Uterus (tissue), 4 donors: ENCODE measurements at regions of chr4 and their contacts with region 1.

Region 1: GRCh38 chr4:113761620-113762185 is at the start of gene CAMK2D:
- DNase-seq: peak; percentile 87 to 89
- H3K4me3 ChIP-seq: peak within 1 kb of the TSS; percentile 68 to 92
- H3K27ac ChIP-seq: peak within 1 kb of the TSS; percentile 97 to 100
- H3K4me1 ChIP-seq: peaks cover 4 to 6% of the 10 kb centered on the region in 2 donors
- H3K27me3 ChIP-seq: no peaks in the 10 kb centered on the region
- CTCF ChIP-seq: peak; percentile 63 to 72 (median 67)
- POLR2A ChIP-seq: peak; percentile 30 to 61
- total RNA-seq, gene CAMK2D: 41.5 to 95.3 (median 54.3) TPM

Region 2: GRCh38 chr4:113394730-113395530 is 366.8 kb before region 1 on chr4:
- intact Hi-C with region 1: loop called (anchors 10 kb)
- DNase-seq: peak; percentile 35 to 70
- H3K4me3 ChIP-seq: no peak overlapping the region
- H3K27ac ChIP-seq: peak overlapping the region in 1 of 2 donors; percentile 53
- H3K4me1 ChIP-seq: no peaks in the 10 kb centered on the region
- H3K27me3 ChIP-seq: no peaks in the 10 kb centered on the region
- CTCF ChIP-seq: peak; percentile 84 to 92 (median 88)
- POLR2A ChIP-seq: no peak

Region 3: DNA sequence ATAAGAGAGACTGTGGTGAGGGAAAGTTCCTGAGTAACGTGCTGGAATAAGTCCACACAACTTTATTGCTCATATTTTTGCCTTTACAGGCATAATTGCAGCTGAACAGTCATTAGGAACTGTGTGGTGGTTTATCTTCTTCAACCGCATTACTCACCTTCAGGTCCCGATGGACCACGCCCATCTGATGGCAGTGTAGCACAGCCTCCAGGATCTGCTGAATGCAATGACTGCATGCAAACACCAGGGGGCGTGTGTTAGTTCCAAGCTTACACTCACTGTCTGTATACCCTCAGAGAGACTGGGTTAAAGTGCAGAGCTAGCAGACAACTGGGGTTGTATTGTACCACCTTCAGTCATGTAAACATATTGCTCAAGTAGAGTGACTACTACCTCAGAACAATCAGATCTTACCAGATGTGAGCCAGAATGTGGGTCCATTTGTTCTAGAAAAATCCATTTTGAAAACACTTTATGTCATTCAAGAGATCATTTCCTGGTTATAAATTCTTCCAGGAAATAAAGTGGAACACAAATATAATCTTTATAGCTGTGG is 214.1 kb before region 1 on chr4:
- intact Hi-C with region 1: loop called (anchors 10 kb)
- DNase-seq: peak; percentile 78 to 84
- H3K4me3 ChIP-seq: no peak overlapping the region
- H3K27ac ChIP-seq: peak overlapping the region; percentile 25 to 55
- H3K4me1 ChIP-seq: no peaks in the 10 kb centered on the region
- H3K27me3 ChIP-seq: no peaks in the 10 kb centered on the region
- CTCF ChIP-seq: peak; percentile 84 to 89 (median 86)
- POLR2A ChIP-seq: no peak